Panc1 (cell line): ENCODE measurements at regions of chr22 and their contacts with region 1.

Region 1: DNA sequence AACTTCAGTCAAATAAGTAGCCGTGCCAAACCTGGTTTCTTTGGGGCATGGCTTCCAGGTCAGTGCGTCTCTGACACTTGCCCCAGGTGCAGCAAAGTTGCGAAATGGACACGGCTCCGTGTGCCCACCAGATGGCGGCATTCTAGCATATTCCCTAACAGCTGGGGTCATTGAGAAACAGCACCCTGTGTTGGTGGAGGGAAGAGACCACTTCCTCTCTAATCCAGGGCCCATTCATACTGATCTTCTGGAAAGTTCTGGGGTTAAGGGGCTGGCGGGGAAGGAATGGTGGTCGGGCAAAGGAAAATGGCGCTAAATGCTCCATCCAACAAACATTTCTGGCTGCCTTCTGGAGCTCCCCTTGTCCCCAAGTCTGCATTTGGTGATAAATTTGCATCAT is 141.2 kb upstream of the TIMP3 start:
- DNase-seq: peak; percentile 4
- ATAC-seq: peak; percentile 71; the same call in 1 of the 2 replicates
- H3K4me3 ChIP-seq: no peak overlapping the region
- H3K27ac ChIP-seq: no peak overlapping the region
- H3K4me1 ChIP-seq: no peaks in the 10 kb centered on the region
- H3K27me3 ChIP-seq: no peaks in the 10 kb centered on the region; the same call in 1 of the 2 replicates
- CTCF ChIP-seq: peak; percentile 68

Region 2: DNA sequence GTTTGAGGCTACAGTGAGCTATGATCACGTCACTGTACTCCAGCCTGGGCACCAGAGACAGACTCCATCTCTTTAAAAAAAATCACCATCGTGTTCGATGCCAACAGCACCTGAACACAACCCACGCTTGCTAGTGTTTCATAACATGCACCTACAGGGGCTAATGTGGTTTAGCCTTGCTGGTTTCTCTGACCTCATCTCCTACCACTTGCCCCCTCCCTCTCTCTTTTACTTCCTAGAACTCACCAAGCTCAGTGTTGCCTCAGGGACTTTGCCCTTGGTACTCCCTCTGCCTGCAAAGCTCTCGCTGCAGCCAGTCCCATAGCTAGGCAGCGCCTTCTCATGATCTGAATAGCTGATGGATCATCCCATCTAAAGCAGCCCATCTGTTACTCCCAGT is 85.9 kb before region 1 on chr22:
- CTCF ChIA-PET with region 1: no interaction called
- POLR2A ChIA-PET with region 1: no interaction called
- in situ Hi-C with region 1: no loop called
- intact Hi-C with region 1: no loop called
- DNase-seq: no peak
- ATAC-seq: no peak
- H3K4me3 ChIP-seq: no peak overlapping the region
- H3K27ac ChIP-seq: no peak overlapping the region
- H3K4me1 ChIP-seq: no peaks in the 10 kb centered on the region
- H3K27me3 ChIP-seq: no peaks in the 10 kb centered on the region; the same call in 1 of the 2 replicates
- CTCF ChIP-seq: no peak

Region 3: DNA sequence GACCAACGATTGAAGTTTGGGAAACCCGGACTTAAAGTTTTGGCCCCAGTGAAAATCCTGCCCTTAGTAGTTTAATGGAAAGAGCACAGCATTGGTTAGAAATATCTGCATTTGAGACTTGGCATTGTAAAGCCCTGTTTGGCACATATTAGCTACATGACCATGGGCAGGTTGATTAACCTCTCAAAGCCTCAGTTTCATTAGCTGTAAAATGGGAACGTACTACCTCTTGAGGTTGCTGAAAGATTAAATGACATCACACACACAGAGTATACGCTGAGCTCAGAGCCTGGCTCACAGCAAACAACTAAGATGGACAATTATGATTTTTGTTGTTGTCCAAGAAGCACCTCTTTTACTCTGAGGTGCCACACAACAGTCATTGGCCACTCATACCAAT is 11.8 kb before region 1 on chr22:
- CTCF ChIA-PET with region 1: no interaction called
- POLR2A ChIA-PET with region 1: no interaction called
- in situ Hi-C with region 1: no loop called
- intact Hi-C with region 1: loop called (anchors 1 kb)
- DNase-seq: no peak
- ATAC-seq: no peak
- H3K4me3 ChIP-seq: no peak overlapping the region
- H3K27ac ChIP-seq: no peak overlapping the region
- H3K4me1 ChIP-seq: no peaks in the 10 kb centered on the region
- H3K27me3 ChIP-seq: no peaks in the 10 kb centered on the region; the same call in 1 of the 2 replicates
- CTCF ChIP-seq: no peak

Region 4: DNA sequence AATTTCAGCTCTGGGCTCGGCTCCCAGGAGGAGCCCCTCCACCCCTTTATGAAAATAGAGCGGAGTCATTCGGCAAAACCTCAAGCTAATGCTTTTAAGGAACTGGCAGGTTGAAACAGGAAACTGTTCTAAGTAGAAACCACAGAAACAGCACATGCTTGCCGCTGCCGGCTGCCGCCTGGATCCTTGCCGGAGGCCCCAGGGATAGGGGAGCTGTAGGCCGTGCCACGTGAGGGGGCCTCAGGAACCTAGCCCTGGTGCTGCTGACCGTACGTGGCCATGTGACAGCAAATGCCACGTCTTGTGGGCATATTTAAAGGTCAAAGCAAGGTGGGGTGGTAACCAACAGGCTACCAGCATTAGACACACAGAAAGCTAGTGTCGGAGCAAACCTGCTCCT is 63.4 kb after region 1 on chr22:
- CTCF ChIA-PET with region 1: no interaction called
- POLR2A ChIA-PET with region 1: no interaction called
- in situ Hi-C with region 1: no loop called
- intact Hi-C with region 1: no loop called
- DNase-seq: no peak
- ATAC-seq: no peak
- H3K4me3 ChIP-seq: no peak overlapping the region
- H3K27ac ChIP-seq: no peak overlapping the region
- H3K4me1 ChIP-seq: no peaks in the 10 kb centered on the region
- H3K27me3 ChIP-seq: no peaks in the 10 kb centered on the region
- CTCF ChIP-seq: no peak

Region 5: GRCh38 chr22:32796865-32797573 is 136.7 kb after region 1 on chr22:
- CTCF ChIA-PET with region 1: interaction called, 5 read pairs
- POLR2A ChIA-PET with region 1: no interaction called
- in situ Hi-C with region 1: no loop called
- intact Hi-C with region 1: loop called (anchors 10 kb)
- DNase-seq: peak; percentile 7
- ATAC-seq: peak; percentile 66; the same call in 1 of the 2 replicates
- H3K4me3 ChIP-seq: no peak overlapping the region
- H3K27ac ChIP-seq: no peak overlapping the region
- H3K4me1 ChIP-seq: no peaks in the 10 kb centered on the region
- H3K27me3 ChIP-seq: no peaks in the 10 kb centered on the region; the same call in 1 of the 2 replicates
- CTCF ChIP-seq: peak; percentile 79

Region 6: DNA sequence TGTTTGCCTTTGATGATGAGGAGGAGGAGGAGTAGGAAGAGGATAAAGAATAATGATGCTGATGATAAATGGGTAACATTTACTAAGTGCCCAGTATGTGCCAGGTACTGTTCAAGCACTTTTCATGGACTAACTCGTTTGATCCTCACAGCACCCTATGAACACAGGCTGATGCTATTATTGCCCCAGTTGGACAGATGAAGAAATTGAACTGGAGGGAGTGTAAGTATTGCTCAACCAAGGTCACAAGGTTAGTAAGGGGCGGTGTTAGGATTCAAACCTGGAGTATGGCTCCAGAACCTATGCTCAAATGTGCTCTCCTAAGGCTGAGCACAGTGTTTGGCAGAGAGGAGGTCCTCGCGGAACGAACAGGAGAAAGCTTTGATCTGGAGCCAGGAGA is 319.3 kb after region 1 on chr22:
- CTCF ChIA-PET with region 1: no interaction called
- POLR2A ChIA-PET with region 1: no interaction called
- in situ Hi-C with region 1: no loop called
- intact Hi-C with region 1: no loop called
- DNase-seq: no peak
- ATAC-seq: no peak
- H3K4me3 ChIP-seq: no peak overlapping the region
- H3K27ac ChIP-seq: no peak overlapping the region
- H3K4me1 ChIP-seq: no peaks in the 10 kb centered on the region
- H3K27me3 ChIP-seq: no peaks in the 10 kb centered on the region
- CTCF ChIP-seq: no peak

Region 7: DNA sequence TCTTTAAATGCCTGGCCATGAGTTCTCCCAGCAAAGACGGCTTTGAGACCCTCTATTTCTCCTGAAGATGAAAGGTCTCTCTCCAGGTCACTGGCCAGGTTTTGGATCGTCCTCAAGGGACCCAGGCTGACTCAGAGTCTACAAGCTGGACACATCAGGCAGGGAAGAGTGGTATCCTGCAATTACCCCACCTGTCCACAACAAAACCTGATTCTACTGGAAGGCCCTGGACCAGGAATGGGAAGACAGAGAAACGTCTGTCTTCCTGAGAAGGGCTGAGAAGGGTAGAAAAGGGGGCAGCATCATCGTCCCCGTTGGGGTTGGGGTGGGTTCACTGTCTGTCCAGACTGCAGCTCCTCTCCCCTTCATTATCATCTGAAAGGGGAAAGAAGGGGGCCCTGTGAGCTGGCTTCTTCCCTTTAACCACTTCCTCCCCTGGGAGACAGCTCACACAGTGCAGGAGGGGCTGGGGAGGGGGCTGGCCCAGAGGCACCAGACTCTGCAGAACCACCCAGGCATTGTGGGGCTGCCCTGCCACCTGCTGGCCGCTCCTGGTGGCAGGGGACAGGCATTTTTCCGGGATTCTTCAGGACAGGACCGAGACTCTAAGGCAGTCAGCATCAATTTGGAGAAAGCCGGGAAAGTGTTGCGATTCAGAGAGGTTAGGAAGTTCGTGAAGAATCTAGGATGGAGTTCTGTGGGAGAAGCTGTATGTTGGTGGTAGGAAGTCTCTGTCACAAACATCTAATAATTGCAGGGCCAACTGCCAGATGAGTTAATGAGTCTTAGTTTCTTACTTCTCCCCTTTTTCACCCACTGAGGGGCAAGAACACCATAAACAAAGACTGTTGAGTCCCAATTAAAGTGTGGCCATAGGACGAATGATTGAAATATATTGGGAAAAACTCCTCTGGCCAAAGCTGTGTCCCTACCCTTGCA is 340.3 kb after region 1 on chr22:
- CTCF ChIA-PET with region 1: no interaction called
- POLR2A ChIA-PET with region 1: no interaction called
- in situ Hi-C with region 1: no loop called
- intact Hi-C with region 1: loop called (anchors 5 kb)
- DNase-seq: peak; percentile 7
- ATAC-seq: peak; percentile 87
- H3K4me3 ChIP-seq: no peak overlapping the region
- H3K27ac ChIP-seq: no peak overlapping the region
- H3K4me1 ChIP-seq: no peaks in the 10 kb centered on the region
- H3K27me3 ChIP-seq: no peaks in the 10 kb centered on the region
- CTCF ChIP-seq: peak; percentile 85